ENCODE measurements at regions of chr11 and their contacts with region 1.

Region 1: DNA sequence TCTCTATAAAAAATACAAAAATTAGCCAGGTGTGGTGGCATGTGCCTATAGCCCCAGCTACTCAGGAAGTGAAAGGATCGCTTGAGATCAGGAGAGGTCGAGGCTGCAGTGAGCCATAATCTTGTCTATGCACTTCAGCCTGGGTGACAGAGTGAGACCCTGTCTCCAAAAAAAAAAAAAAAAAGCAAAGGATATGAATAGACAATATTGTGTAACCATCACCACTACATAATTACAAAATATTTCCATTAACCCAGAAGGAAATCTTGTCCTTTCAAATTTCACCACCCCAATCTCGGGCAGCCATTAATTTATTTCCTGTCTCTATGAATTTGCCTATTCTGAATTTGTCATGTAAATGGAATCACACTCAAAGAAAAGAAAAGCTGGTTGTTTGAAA is 21.2 kb downstream of the RSF1 start:
- DNase-seq: no peak
- H3K4me3 ChIP-seq: no peak overlapping the region
- H3K27ac ChIP-seq: no peak overlapping the region
- H3K4me1 ChIP-seq: no peaks in the 10 kb centered on the region
- H3K27me3 ChIP-seq: no peaks in the 10 kb centered on the region
- CTCF ChIP-seq: no peak

Region 2: DNA sequence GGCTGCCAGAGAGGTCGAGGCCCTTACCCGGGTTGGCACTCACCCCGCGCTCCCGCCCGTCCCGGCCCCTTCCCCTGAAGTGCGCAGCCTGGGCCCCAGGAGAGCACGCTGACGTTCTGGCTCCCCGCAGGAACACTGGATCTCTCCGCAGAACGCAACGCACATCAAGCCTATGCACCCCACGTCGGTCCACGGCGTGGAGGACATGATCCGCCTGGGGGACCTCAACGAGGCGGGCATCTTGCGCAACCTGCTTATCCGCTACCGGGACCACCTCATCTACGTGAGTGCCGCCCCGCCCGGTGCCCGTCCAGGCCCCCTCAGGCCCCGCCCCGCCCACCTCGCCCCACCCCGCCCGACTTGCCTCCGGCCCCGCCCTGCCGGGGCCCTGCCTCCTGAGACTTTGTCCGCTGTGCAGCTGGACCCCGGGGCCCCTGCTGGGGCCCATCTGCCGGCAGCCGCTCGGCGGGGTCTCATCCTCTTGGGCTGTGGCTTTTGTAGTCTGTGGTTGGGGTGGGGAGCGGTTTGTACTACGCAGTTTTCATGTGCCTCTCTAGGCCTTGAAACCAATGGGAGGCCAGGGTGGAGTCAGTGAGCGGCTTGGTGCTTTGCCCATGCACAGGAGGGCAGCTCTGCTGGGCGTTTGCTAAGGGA is 651.5 kb before region 1 on chr11:
- CTCF ChIA-PET with region 1: no interaction called
- POLR2A ChIA-PET with region 1: no interaction called
- intact Hi-C with region 1: no loop called
- DNase-seq: no peak
- H3K4me3 ChIP-seq: no peak overlapping the region
- H3K27ac ChIP-seq: no peak overlapping the region
- H3K4me1 ChIP-seq: no peaks in the 10 kb centered on the region
- H3K27me3 ChIP-seq: peaks cover 47% of the 10 kb centered on the region
- CTCF ChIP-seq: no peak

Region 3: GRCh38 chr11:77630157-77630710 is 169.1 kb before region 1 on chr11:
- CTCF ChIA-PET with region 1: interaction called, 19 read pairs
- POLR2A ChIA-PET with region 1: no interaction called
- intact Hi-C with region 1: no loop called
- DNase-seq: no peak
- H3K4me3 ChIP-seq: no peak overlapping the region
- H3K27ac ChIP-seq: no peak overlapping the region
- H3K4me1 ChIP-seq: no peaks in the 10 kb centered on the region
- H3K27me3 ChIP-seq: no peaks in the 10 kb centered on the region
- CTCF ChIP-seq: no peak

Region 4: DNA sequence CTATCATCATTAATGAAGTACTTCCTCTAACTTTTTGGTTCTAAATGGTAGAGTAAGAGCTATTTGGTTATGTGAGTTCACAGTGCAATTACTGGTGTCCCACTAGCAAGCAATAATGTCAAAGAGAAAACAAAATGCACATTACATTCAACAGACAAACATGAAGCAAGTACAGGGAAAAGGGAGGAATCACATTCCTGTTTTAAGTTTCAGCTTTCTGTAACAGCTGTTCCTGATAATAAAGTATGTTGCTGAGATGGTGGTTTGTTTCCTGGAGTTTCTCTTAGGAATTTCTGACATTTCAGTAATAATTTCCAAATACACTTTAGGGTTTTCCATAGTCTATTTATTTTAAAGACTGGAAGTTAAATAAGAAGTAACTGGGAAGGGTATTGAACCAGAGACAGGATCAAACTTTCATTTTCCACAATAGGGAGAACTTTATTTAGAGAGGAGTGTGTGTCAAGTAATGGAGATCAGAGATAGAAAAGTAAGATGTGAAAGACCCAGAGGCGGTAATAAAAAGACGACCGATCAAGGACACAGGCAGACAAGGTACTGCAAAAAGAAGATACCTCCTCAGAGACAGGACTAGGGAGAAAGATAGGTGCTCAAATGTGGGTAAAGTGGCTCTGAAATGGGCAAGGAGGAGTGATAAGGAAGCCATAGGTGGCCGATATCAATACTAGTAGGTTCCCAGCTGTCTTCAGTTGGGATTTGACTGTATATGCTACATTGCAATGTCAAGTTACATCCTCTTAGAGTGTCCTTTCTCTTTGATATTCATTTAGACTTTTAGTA is 140.9 kb before region 1 on chr11:
- CTCF ChIA-PET with region 1: no interaction called
- POLR2A ChIA-PET with region 1: interaction called, 11 read pairs
- intact Hi-C with region 1: no loop called
- DNase-seq: no peak
- H3K4me3 ChIP-seq: no peak overlapping the region
- H3K27ac ChIP-seq: no peak overlapping the region
- H3K4me1 ChIP-seq: no peaks in the 10 kb centered on the region
- H3K27me3 ChIP-seq: no peaks in the 10 kb centered on the region
- CTCF ChIP-seq: no peak

Region 5: GRCh38 chr11:77687085-77687484 is 112.3 kb before region 1 on chr11:
- CTCF ChIA-PET with region 1: no interaction called
- POLR2A ChIA-PET with region 1: no interaction called
- intact Hi-C with region 1: no loop called
- DNase-seq: no peak
- H3K4me3 ChIP-seq: no peak overlapping the region
- H3K27ac ChIP-seq: no peak overlapping the region
- H3K4me1 ChIP-seq: no peaks in the 10 kb centered on the region
- H3K27me3 ChIP-seq: no peaks in the 10 kb centered on the region
- CTCF ChIP-seq: no peak

Measured in PC-9 (cell line).